ENCODE measurements at regions of chr7 and their contacts with region 1.

Region 1: DNA sequence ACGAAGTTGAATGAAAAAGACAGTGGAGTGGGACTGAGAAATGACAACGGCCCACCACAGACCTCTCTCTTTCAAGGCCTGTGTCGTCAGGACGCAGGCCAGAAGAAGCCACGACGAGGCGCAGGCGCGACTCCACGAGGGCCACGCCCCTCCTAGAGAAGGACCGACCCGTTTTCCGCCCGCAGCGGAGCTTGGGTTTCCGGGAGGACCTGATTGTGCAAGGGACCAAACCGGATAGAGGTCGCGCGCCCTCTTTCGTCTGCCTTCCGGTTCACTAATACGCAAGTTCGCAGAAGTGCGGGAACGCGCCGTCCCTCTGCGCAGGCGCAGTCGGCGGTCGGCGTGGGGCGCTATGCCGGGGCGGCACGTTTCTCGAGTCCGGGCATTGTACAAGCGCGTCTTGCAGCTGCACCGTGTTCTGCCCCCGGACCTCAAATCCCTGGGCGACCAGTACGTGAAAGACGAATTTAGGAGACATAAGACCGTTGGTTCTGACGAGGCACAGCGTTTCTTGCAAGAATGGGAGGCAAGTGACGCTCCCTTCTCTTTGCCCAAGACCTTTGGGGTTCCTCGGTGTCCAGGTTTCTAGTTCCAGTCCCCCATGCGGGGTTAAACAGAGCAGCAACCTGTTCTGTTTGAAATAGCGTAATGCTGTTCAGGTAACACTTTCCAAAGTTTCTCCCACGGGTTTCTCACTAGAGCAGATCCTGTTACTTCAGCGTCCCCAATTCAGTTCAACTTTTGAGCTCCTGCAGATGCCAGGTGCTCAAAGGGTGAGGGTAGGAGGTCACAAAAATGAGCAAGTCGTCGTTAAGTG is at the start of gene SDHAF3:
- DNase-seq: peak; percentile 97 to 98 (median 98)
- H3K4me3 ChIP-seq: peak within 1 kb of the TSS; percentile 87
- H3K4me3 Mint-ChIP-seq: peak within 1 kb of the TSS; percentile 93 to 98 (median 96)
- H3K27ac ChIP-seq: peak within 1 kb of the TSS; percentile 56
- H3K27ac Mint-ChIP-seq: peak within 1 kb of the TSS; percentile 93 to 98 (median 96)
- H3K4me1 ChIP-seq: peaks cover 23% of the 10 kb centered on the region
- H3K4me1 Mint-ChIP-seq: peaks cover 18 to 44% (median 33%) of the 10 kb centered on the region in 4 donors
- H3K27me3 ChIP-seq: no peaks in the 10 kb centered on the region
- H3K27me3 Mint-ChIP-seq: no peaks in the 10 kb centered on the region
- total RNA-seq, gene SDHAF3: 10.8 to 13.2 TPM

Region 2: DNA sequence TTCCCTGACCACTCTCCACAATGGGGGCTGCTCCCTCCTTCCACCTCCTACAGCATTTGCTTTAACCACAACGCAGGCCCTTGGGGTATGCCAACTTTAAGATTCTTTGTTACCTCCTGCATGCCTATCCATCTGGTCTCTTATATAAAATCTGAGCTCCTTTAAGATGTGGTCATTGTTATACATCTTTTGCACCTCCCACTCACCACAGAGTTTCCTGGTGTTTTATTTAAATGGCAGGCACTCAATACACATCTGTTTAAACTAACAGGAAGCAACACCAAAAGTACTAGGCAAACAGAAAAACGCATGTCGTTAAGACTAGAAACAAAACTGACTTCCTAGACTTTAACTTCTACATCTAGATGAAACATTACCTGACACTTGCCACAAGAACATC is 832.0 kb before region 1 on chr7:
- CTCF ChIA-PET with region 1: no interaction called
- POLR2A ChIA-PET with region 1: no interaction called
- intact Hi-C with region 1: loop called (anchors 5 kb)
- DNase-seq: peak; percentile 74 to 85 (median 79)
- H3K4me3 ChIP-seq: peak overlapping the region in 1 of 2 donors; percentile 21
- H3K4me3 Mint-ChIP-seq: peak overlapping the region; percentile 18 to 90 (median 76)
- H3K27ac ChIP-seq: peak overlapping the region; percentile 54
- H3K27ac Mint-ChIP-seq: peak overlapping the region; percentile 83 to 99 (median 97)
- H3K4me1 ChIP-seq: peaks cover 40% of the 10 kb centered on the region
- H3K4me1 Mint-ChIP-seq: peaks cover 31 to 44% (median 41%) of the 10 kb centered on the region in 4 donors
- H3K27me3 ChIP-seq: no peaks in the 10 kb centered on the region
- H3K27me3 Mint-ChIP-seq: no peaks in the 10 kb centered on the region

Region 3: GRCh38 chr7:96321658-96322372 is 795.8 kb before region 1 on chr7 and contains the start of gene SLC25A13:
- CTCF ChIA-PET with region 1: no interaction called
- POLR2A ChIA-PET with region 1: no interaction called
- intact Hi-C with region 1: loop called (anchors 2 kb)
- DNase-seq: peak; percentile 65 to 71 (median 70)
- H3K4me3 ChIP-seq: peak within 1 kb of the TSS; percentile 43 to 78
- H3K4me3 Mint-ChIP-seq: peak within 1 kb of the TSS; percentile 90 to 98 (median 92)
- H3K27ac ChIP-seq: peak within 1 kb of the TSS; percentile 72
- H3K27ac Mint-ChIP-seq: peak within 1 kb of the TSS; percentile 87 to 97 (median 94)
- H3K4me1 ChIP-seq: peaks cover 18% of the 10 kb centered on the region
- H3K4me1 Mint-ChIP-seq: peaks cover 9 to 38% (median 19%) of the 10 kb centered on the region in 4 donors
- H3K27me3 ChIP-seq: no peaks in the 10 kb centered on the region
- H3K27me3 Mint-ChIP-seq: peaks cover 0 to 2% of the 10 kb centered on the region in 2 donors
- total RNA-seq, gene SLC25A13: 9.1 to 12.2 TPM

Region 4: DNA sequence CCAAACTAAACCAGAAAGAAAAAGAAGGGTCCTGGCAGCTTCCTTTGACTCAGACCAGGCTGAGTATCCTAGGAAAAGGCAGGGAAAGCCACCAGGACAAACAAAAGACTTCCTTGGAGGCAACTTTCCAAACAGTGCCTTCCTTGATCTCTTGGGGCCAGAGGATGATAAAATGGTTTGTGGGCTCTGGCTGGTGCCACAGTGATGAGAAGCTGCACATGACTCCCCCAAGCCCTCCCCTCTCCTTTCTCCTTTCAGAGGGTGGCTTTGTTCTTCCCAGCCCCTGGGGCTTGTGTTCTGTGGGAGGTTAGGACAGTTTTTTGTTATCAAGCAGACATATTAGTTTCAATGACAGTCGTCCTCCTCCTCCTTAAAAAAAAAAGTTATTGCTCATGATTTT is 591.1 kb before region 1 on chr7:
- CTCF ChIA-PET with region 1: no interaction called
- POLR2A ChIA-PET with region 1: no interaction called
- intact Hi-C with region 1: no loop called
- DNase-seq: no peak
- H3K4me3 ChIP-seq: no peak overlapping the region
- H3K4me3 Mint-ChIP-seq: no peak overlapping the region
- H3K27ac ChIP-seq: no peak overlapping the region
- H3K27ac Mint-ChIP-seq: no peak overlapping the region
- H3K4me1 ChIP-seq: no peaks in the 10 kb centered on the region
- H3K4me1 Mint-ChIP-seq: peaks cover 0 to 9% (median 2%) of the 10 kb centered on the region in 4 donors
- H3K27me3 ChIP-seq: no peaks in the 10 kb centered on the region
- H3K27me3 Mint-ChIP-seq: peaks cover 11 to 21% of the 10 kb centered on the region in 2 donors

Region 5: GRCh38 chr7:97104719-97105238 is 12.8 kb before region 1 on chr7:
- CTCF ChIA-PET with region 1: interaction called, 13 read pairs
- POLR2A ChIA-PET with region 1: interaction called, 3 read pairs
- intact Hi-C with region 1: no loop called
- DNase-seq: peak; percentile 27 to 59 (median 50)
- H3K4me3 ChIP-seq: no peak overlapping the region
- H3K4me3 Mint-ChIP-seq: no peak overlapping the region
- H3K27ac ChIP-seq: no peak overlapping the region
- H3K27ac Mint-ChIP-seq: no peak overlapping the region
- H3K4me1 ChIP-seq: no peaks in the 10 kb centered on the region
- H3K4me1 Mint-ChIP-seq: no peaks in the 10 kb centered on the region
- H3K27me3 ChIP-seq: no peaks in the 10 kb centered on the region
- H3K27me3 Mint-ChIP-seq: peaks cover 15 to 22% of the 10 kb centered on the region in 2 donors

Region 6: DNA sequence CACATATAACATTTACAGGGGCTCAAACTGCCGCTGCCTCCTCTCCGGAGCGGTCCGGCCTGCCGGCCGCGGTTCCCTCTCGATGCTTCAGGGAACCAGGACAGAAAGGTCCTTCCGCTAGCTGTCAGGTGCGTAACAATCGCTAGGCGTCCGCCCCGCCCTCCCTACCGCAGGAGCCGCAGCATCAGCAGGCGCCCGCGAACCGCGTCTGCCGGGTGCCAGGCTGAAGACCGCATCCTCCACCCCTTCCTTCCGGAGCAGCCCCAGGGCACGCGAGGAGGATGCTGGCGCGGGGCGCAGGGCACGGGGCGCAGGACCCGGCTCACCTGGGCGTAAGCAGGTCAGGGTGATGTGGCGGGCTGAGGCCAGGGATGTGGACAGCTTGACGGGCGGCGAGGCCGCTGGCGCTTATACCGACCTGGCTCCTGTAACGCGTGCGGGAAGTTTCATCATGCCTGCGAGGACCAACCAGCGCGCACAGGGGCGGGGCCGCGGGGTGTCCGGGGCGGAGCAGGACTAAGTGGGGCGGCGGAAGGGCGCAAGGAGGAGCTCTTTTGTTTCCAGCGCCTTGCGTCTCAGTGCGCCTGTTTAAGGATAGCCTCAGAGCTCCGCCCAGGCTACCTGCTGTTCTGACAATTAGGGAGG is 754.6 kb after region 1 on chr7 and contains the start of gene ASNS:
- CTCF ChIA-PET with region 1: no interaction called
- POLR2A ChIA-PET with region 1: interaction called, 13 read pairs
- intact Hi-C with region 1: loop called (anchors 1 kb)
- DNase-seq: peak; percentile 80 to 88 (median 85)
- H3K4me3 ChIP-seq: peak within 1 kb of the TSS; percentile 75 to 78
- H3K4me3 Mint-ChIP-seq: peak within 1 kb of the TSS; percentile 85 to 93 (median 90)
- H3K27ac ChIP-seq: peak within 1 kb of the TSS; percentile 46
- H3K27ac Mint-ChIP-seq: peak within 1 kb of the TSS; percentile 84 to 95 (median 92)
- H3K4me1 ChIP-seq: peaks cover 20% of the 10 kb centered on the region
- H3K4me1 Mint-ChIP-seq: peaks cover 9 to 19% (median 12%) of the 10 kb centered on the region in 4 donors
- H3K27me3 ChIP-seq: no peaks in the 10 kb centered on the region
- H3K27me3 Mint-ChIP-seq: no peaks in the 10 kb centered on the region
- total RNA-seq, gene ASNS: 36.6 to 37.9 TPM

Region 7: GRCh38 chr7:97971990-97972943 is 854.7 kb after region 1 on chr7:
- CTCF ChIA-PET with region 1: no interaction called
- POLR2A ChIA-PET with region 1: interaction called, 3 read pairs
- intact Hi-C with region 1: loop called (anchors 2 kb)
- DNase-seq: peak; percentile 81 to 85 (median 83)
- H3K4me3 ChIP-seq: peak overlapping the region; percentile 91 to 93
- H3K4me3 Mint-ChIP-seq: peak overlapping the region; percentile 93 to 98 (median 96)
- H3K27ac ChIP-seq: peak overlapping the region; percentile 65
- H3K27ac Mint-ChIP-seq: peak overlapping the region; percentile 86 to 96 (median 95)
- H3K4me1 ChIP-seq: peaks cover 15% of the 10 kb centered on the region
- H3K4me1 Mint-ChIP-seq: peaks cover 10 to 35% (median 19%) of the 10 kb centered on the region in 4 donors
- H3K27me3 ChIP-seq: no peaks in the 10 kb centered on the region
- H3K27me3 Mint-ChIP-seq: no peaks in the 10 kb centered on the region

Region 8: DNA sequence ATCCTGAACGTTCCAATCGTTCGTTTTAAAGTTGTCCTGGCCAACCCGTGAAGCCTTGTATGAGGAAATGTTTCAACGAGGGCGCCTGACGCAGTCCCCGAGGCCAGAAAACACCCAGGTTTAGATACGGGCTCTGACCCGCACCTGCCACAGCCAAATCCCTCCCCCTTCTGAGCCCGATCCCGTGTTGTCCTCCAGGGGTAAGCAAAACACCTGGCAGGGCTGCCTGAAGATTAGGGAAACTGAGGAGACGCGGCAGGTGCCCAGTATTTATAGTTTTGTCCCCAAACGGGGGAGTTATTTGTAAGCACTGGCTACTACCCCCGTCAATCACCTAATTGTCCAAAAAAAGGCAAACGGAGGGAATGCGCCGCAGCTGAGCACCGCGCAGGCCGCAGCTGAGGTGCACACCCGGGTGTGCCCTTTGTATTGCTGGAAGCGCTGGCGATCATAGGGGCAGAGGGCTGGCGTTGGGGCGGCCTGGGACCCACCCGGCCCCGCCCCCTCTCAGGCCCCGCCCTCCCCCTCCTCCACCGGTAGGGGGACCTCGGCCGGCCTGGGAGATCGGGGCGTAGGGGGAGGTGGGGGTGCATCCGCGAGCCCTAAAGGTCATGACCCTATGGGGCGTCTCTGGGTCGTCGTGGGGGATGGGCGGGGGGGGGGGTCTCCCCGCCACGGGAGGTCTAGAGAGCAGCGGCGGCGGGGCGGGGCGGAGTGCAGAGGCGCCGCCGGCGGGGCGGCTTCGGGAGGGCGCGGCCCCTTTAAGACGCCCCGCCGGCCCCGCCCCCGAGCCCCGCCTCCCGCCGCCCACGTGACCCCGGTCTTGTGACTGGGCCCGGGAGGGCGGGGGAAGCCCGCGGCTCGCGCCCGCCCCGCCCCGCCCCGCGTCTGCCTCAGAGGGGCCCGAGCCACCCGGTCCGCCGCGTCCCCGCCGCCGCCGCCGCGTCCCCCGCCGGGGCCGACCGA is 1163.5 kb after region 1 on chr7 and contains the start of gene BRI3:
- CTCF ChIA-PET with region 1: no interaction called
- POLR2A ChIA-PET with region 1: no interaction called
- intact Hi-C with region 1: loop called (anchors 5 kb)
- DNase-seq: peak; percentile 82 to 91 (median 84)
- H3K4me3 ChIP-seq: peak within 1 kb of the TSS; percentile 73 to 81
- H3K4me3 Mint-ChIP-seq: peak within 1 kb of the TSS; percentile 86 to 93 (median 88)
- H3K27ac ChIP-seq: peak within 1 kb of the TSS; percentile 74
- H3K27ac Mint-ChIP-seq: peak within 1 kb of the TSS; percentile 77 to 92 (median 90)
- H3K4me1 ChIP-seq: peaks cover 43% of the 10 kb centered on the region
- H3K4me1 Mint-ChIP-seq: peaks cover 10 to 36% (median 27%) of the 10 kb centered on the region in 4 donors
- H3K27me3 ChIP-seq: no peaks in the 10 kb centered on the region
- H3K27me3 Mint-ChIP-seq: no peaks in the 10 kb centered on the region
- total RNA-seq, gene BRI3: 73.8 to 80.4 TPM